Activated CD4-positive, alpha-beta T cell treated with anti-CD3 and anti-CD28 coated beads for 36 hours (primary cell): ENCODE measurements at regions of chr17 and their contacts with region 1.

Region 1: GRCh38 chr17:40098846-40099618 is 1.4 kb downstream of the NR1D1 start:
- DNase-seq: peak; percentile 99
- ATAC-seq: peak; percentile 59
- H3K4me3 Mint-ChIP-seq: peak overlapping the region; percentile 88
- H3K27ac Mint-ChIP-seq: peak overlapping the region; percentile 90
- H3K4me1 Mint-ChIP-seq: peaks cover 86% of the 10 kb centered on the region
- H3K27me3 Mint-ChIP-seq: no peaks in the 10 kb centered on the region

Region 2: GRCh38 chr17:39401412-39402243 is 697.4 kb before region 1 on chr17 and contains the start of gene FBXL20:
- CTCF ChIA-PET with region 1: no interaction called
- POLR2A ChIA-PET with region 1: no interaction called
- intact Hi-C with region 1: loop called in 1 of 2 experiments (anchors 10 kb)
- DNase-seq: peak; percentile 97
- ATAC-seq: peak; percentile 63
- H3K4me3 Mint-ChIP-seq: peak within 1 kb of the TSS; percentile 91
- H3K27ac Mint-ChIP-seq: peak within 1 kb of the TSS; percentile 92
- H3K4me1 Mint-ChIP-seq: peaks cover 48% of the 10 kb centered on the region
- H3K27me3 Mint-ChIP-seq: no peaks in the 10 kb centered on the region
- total RNA-seq, gene FBXL20: 16.9 to 18.9 TPM

Region 3: GRCh38 chr17:39794249-39794970 is 304.6 kb before region 1 on chr17:
- CTCF ChIA-PET with region 1: no interaction called
- POLR2A ChIA-PET with region 1: no interaction called
- intact Hi-C with region 1: loop called in 1 of 2 experiments (anchors 2 kb)
- DNase-seq: peak; percentile 33
- ATAC-seq: peak; percentile 14
- H3K4me3 Mint-ChIP-seq: no peak overlapping the region
- H3K27ac Mint-ChIP-seq: peak overlapping the region; percentile 82
- H3K4me1 Mint-ChIP-seq: peaks cover 76% of the 10 kb centered on the region
- H3K27me3 Mint-ChIP-seq: no peaks in the 10 kb centered on the region

Region 4: GRCh38 chr17:40062329-40063186 is 36.5 kb before region 1 on chr17 and contains the start of gene THRA:
- CTCF ChIA-PET with region 1: interaction called, 5 read pairs
- POLR2A ChIA-PET with region 1: no interaction called
- intact Hi-C with region 1: loop called in 1 of 2 experiments (anchors 2 kb)
- DNase-seq: peak; percentile 82
- ATAC-seq: peak; percentile 84
- H3K4me3 Mint-ChIP-seq: peak within 1 kb of the TSS; percentile 77
- H3K27ac Mint-ChIP-seq: peak within 1 kb of the TSS; percentile 74
- H3K4me1 Mint-ChIP-seq: peaks cover 45% of the 10 kb centered on the region
- H3K27me3 Mint-ChIP-seq: no peaks in the 10 kb centered on the region
- total RNA-seq, gene THRA: 12.9 to 13.1 TPM

Region 5: DNA sequence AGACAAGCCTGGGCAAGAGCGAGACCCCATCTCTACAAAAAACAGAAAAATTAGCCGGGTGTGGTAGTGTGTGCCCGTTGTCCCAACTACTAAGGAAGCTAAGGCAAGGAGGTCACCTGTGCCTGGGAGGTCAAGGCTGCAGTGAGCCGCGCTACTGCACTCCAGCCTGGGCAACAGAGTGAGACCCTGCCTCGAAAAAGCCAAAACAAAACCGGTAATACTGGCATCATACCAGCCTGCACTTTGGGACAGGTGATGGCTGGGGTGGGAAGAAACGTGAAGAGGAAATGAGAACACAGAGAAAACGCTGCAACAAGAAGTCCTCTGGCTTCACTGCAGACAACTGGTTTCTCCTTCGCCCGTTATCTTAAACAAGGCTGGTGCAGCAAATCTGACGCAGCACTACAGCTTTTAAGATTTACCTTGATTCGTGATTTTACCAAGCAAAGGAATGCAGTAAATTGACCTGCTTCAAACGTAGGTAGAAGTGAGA is 40.6 kb after region 1 on chr17:
- CTCF ChIA-PET with region 1: interaction called, 3 read pairs
- POLR2A ChIA-PET with region 1: interaction called, 4 read pairs
- intact Hi-C with region 1: loop called (anchors 1 kb)
- DNase-seq: no peak
- ATAC-seq: peak; percentile 5
- H3K4me3 Mint-ChIP-seq: peak overlapping the region; percentile 90
- H3K27ac Mint-ChIP-seq: peak overlapping the region; percentile 98
- H3K4me1 Mint-ChIP-seq: peaks cover 39% of the 10 kb centered on the region
- H3K27me3 Mint-ChIP-seq: no peaks in the 10 kb centered on the region

Region 6: DNA sequence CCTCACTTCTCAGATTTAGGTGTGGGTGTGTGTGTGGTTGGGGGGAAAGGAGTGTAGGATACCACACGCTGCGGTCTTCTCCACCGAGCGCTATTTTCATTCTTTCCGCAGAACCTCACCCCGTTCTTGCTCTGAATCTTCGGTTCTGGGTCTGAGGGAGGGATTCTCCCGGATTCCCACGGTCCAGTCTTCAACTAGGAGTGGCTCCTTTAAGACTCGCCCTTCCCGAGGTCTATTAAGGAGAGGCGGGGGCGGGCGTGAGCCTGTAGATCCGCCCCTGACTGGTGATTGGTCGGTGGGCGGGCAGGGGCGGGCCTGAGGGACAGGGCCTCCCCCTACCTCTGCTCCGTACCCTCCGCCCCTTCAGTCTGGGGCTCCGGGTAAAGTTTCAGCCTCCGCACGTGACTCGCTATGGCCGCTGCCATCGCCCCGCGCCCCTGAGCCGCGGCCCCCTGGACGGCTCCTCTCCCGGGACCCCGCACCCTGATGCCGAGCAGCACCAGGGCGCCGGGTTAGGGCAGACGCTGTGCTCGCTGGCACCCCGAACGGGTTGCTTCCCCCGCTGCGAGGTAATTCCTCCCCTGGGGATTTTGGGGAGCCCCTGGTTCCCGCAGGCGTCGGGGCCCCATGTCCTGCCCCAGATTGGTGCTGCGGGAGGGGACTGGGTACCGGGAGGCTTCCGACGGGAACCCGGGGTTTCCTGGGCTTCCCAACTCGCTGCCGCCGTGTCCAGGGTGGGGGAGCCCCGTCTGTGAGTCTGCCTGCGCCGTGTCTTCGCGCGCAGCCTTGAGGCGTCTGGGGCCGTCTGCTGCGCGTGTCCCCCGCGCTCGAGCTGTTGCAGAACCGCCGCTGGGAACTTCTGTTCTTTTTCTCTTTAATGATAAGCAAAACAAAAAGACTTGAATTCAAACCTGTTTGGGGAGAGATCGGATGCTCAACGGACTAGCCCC is 219.1 kb after region 1 on chr17:
- CTCF ChIA-PET with region 1: no interaction called
- POLR2A ChIA-PET with region 1: no interaction called
- intact Hi-C with region 1: loop called in 1 of 2 experiments (anchors 1 kb)
- DNase-seq: peak; percentile 96
- ATAC-seq: peak; percentile 72
- H3K4me3 Mint-ChIP-seq: peak overlapping the region; percentile 85
- H3K27ac Mint-ChIP-seq: peak overlapping the region; percentile 91
- H3K4me1 Mint-ChIP-seq: peaks cover 75% of the 10 kb centered on the region
- H3K27me3 Mint-ChIP-seq: no peaks in the 10 kb centered on the region

Region 7: DNA sequence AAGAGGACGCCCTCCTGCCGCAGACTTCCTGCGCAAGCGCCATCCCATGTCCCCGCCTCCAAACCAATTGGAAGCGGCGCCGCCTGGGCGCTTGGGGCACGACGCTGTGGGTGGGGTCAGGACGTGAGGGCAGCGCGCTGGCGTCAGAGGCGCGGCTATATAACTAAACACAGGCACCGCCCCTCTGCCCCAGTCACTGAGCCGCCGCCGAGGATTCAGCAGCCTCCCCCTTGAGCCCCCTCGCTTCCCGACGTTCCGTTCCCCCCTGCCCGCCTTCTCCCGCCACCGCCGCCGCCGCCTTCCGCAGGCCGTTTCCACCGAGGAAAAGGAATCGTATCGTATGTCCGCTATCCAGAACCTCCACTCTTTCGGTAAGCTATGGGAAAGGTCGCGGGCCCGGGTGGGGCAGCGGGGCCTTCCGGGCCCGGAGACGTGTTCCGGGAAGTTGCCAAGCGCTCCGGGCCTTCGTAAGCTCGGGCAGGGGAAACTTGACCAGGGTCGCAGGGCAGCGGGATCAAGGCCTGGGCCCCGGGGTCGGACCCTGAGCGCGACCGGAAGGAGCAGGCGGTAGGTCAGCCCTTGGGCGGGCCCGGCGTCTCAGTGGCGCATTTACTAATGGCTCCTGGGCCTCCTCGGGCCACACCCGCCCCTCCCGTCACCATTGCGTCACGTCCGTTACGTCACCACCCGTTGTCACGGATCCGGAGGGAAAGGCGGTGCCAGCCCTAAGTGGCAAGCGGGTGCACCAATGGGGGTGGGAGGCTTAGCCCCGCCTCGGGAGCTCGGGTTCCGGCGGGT is 1589.9 kb after region 1 on chr17 and contains the start of gene EIF1:
- CTCF ChIA-PET with region 1: no interaction called
- POLR2A ChIA-PET with region 1: no interaction called
- intact Hi-C with region 1: loop called in 1 of 2 experiments (anchors 2 kb)
- DNase-seq: peak; percentile 100
- ATAC-seq: peak; percentile 81
- H3K4me3 Mint-ChIP-seq: peak within 1 kb of the TSS; percentile 97
- H3K27ac Mint-ChIP-seq: peak within 1 kb of the TSS; percentile 95
- H3K4me1 Mint-ChIP-seq: peaks cover 20% of the 10 kb centered on the region
- H3K27me3 Mint-ChIP-seq: no peaks in the 10 kb centered on the region
- total RNA-seq, gene EIF1: 869 to 977 TPM